ENCODE measurements at regions of chr17 and their contacts with region 1.

Region 1: DNA sequence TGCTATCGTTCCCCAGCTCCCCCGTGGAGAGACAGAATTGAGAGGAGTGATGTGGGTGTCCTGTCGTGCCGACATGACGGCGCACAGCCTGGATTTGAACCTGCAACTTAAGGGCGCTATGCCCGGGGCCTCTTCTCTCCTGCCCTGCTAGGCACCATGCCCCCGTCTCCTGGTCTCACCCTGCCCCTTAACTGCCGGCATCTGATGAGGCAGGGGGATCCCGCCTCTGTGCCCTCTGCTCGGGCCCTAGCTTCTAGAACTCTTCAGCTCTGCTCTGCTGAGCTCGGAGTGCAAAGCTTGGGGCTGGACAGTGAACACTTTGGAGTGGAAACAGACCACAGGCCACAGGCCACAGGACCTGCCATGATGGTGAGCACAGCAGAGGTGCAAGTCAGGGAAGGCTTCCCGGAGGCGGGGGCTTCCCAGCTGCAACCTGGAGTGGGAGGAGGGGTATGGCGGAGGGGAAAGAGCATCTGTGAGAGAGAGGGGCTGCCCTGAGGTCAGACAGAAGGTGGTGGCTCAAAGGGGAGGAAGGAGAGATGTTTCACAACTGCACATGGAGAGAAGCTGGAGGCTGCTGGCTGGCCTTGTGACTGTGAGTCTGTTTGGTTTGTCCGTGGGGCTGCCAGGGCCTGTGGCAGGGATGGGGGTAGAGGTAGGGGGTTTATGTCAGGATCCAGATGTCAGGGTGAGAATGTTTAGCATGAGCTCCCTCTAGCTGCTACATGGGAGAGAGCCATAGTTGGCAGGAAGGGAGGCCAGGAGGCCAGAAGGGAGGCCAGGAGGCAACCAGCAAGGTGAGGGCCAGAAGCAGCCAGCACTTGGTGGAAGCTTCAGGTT is 107.8 kb downstream of the CRLF3 start:
- DNase-seq: no peak
- H3K4me3 ChIP-seq: no peak overlapping the region
- H3K27ac ChIP-seq: no peak overlapping the region
- H3K4me1 ChIP-seq: no peaks in the 10 kb centered on the region
- H3K27me3 ChIP-seq: no peaks in the 10 kb centered on the region
- CTCF ChIP-seq: no peak
- POLR2A ChIP-seq: no peak

Region 2: DNA sequence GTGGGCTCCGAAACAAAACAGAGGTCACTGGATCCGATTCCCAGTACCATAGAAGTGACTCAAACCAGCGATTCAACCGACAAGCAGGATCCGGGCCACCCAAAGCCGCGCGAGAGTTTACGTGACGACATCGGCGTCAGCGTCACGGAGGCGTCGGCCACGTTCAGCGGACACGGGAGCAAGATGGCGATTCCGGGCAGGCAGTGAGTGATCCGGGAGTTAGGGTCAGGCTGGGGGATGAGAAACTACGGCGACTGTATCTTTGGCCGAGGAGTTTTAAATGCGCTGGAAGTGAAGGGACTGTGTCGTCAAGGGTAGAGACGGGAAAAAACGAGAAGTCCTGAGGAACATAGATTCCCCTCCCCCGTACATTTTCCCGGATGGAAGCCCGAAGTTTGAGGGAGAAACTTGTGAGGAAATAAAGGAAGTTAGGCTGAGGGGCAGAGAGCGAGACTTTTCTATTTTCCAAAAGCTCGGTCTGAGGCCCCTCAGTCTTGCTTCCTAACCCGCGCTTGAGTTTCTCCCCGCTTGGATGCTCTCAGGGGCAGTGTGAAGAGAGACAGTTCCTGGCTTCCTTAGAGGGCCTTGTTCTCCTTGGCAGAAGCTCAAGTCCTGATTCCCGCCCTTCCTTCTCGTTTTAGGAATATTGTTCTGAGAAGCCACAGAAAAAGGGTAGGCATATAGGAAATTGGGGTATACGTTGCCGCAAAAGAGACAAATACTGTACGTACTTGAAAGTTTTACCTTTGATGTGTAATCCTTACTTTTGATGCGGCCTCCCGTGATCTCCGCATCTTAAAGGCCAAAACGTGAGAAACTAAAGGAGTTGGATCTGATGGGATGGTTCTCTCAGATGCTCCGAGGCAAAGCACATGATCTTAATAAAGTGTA is 599.8 kb before region 1 on chr17 and contains the start of gene NSRP1:
- CTCF ChIA-PET with region 1: no interaction called
- POLR2A ChIA-PET with region 1: no interaction called
- dilution Hi-C with region 1: no loop called
- intact Hi-C with region 1: loop called (anchors 10 kb)
- DNase-seq: peak; percentile 97
- H3K4me3 ChIP-seq: peak within 1 kb of the TSS; percentile 61 to 92 (median 81)
- H3K27ac ChIP-seq: peak within 1 kb of the TSS; percentile 96
- H3K4me1 ChIP-seq: peaks cover 14% of the 10 kb centered on the region
- H3K27me3 ChIP-seq: no peaks in the 10 kb centered on the region
- CTCF ChIP-seq: no peak
- POLR2A ChIP-seq: peak; percentile 94
- total RNA-seq, gene NSRP1: 28.4 and 29.1 TPM in 2 replicates

Region 3: DNA sequence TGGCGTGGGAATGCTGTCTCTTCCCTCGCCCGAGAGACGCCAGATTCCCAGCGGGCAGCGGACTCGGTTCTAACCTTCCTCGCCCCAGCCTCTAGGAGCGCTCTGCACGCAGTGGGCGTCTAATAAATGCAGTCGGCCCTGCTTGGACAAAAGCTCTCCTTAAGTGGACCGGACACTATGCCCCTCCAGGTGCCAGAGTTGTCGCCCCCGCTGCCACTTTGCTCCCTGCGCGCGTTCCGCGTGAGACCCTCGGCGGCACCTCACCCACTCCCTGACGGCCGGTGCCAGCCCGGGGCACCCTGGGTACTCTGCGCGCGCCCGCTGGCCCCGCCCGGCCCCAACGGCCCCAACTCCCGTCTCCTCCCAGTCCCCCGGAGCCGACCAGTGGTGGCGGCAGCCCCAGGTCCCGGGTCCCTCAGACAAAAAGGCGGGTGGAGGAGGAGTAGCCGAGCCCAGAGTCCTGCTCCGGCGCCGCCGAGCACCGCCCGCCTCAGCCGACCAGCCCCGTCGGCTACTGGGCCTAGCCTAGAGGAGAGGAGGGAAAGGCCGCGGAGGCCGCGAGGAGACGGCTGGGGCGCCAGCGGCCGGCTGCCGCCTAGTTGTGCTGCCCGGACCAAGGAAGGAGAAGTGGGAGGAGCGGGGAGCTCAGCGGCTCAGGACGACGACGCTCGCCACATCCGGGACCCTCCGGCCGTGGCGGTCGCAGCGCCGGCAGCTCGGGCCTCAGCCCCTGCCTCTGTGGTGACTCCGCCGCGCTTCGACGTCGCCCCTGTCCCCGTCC is 116.4 kb before region 1 on chr17:
- CTCF ChIA-PET with region 1: interaction called, 3 read pairs
- POLR2A ChIA-PET with region 1: no interaction called
- dilution Hi-C with region 1: no loop called
- intact Hi-C with region 1: loop called (anchors 5 kb)
- DNase-seq: peak; percentile 85
- H3K4me3 ChIP-seq: peak overlapping the region; percentile 40 to 99 (median 71)
- H3K27ac ChIP-seq: peak overlapping the region; percentile 50
- H3K4me1 ChIP-seq: peaks cover 7% of the 10 kb centered on the region
- H3K27me3 ChIP-seq: no peaks in the 10 kb centered on the region
- CTCF ChIP-seq: peak; percentile 53 to 77
- POLR2A ChIP-seq: no peak